Activated CD8-positive, alpha-beta T cell treated with anti-CD3 and anti-CD28 coated beads, Interleukin-2, amount 10 ng/mL, durations not matched to agents 7 days and 5 days (primary cell): ENCODE measurements at regions of chr19 and their contacts with region 1.

Region 1: GRCh38 chr19:1064661-1065605 is 2.0 kb upstream of the ARHGAP45 start:
- DNase-seq: peak; percentile 77
- ATAC-seq: peak; percentile 38
- H3K4me3 Mint-ChIP-seq: peak overlapping the region; percentile 19
- H3K27ac Mint-ChIP-seq: peak overlapping the region; percentile 74
- H3K4me1 Mint-ChIP-seq: peaks cover 48% of the 10 kb centered on the region
- H3K27me3 Mint-ChIP-seq: no peaks in the 10 kb centered on the region

Region 2: GRCh38 chr19:1026189-1027019 is 38.5 kb before region 1 on chr19 and contains the start of gene CNN2:
- CTCF ChIA-PET with region 1: interaction called, 6 read pairs
- POLR2A ChIA-PET with region 1: interaction called, 13 read pairs
- DNase-seq: peak; percentile 74
- ATAC-seq: peak; percentile 72
- H3K4me3 Mint-ChIP-seq: peak within 1 kb of the TSS; percentile 98
- H3K27ac Mint-ChIP-seq: peak within 1 kb of the TSS; percentile 89
- H3K4me1 Mint-ChIP-seq: peaks cover 30% of the 10 kb centered on the region
- H3K27me3 Mint-ChIP-seq: no peaks in the 10 kb centered on the region
- total RNA-seq, gene CNN2: 417 to 455 TPM

Region 3: GRCh38 chr19:1039646-1040475 is 25.1 kb before region 1 on chr19 and contains the start of gene ABCA7:
- CTCF ChIA-PET with region 1: interaction called, 33 read pairs
- POLR2A ChIA-PET with region 1: interaction called, 27 read pairs
- DNase-seq: peak; percentile 99
- ATAC-seq: peak; percentile 94
- H3K4me3 Mint-ChIP-seq: peak within 1 kb of the TSS; percentile 96
- H3K27ac Mint-ChIP-seq: peak within 1 kb of the TSS; percentile 84
- H3K4me1 Mint-ChIP-seq: peaks cover 64% of the 10 kb centered on the region
- H3K27me3 Mint-ChIP-seq: no peaks in the 10 kb centered on the region
- total RNA-seq, gene ABCA7: 76.6 to 77.5 TPM

Region 4: GRCh38 chr19:1087813-1088415 is 23.0 kb after region 1 on chr19:
- CTCF ChIA-PET with region 1: interaction called, 17 read pairs
- POLR2A ChIA-PET with region 1: interaction called, 113 read pairs
- DNase-seq: peak; percentile 68
- ATAC-seq: peak; percentile 47
- H3K4me3 Mint-ChIP-seq: peak overlapping the region; percentile 56
- H3K27ac Mint-ChIP-seq: peak overlapping the region; percentile 83
- H3K4me1 Mint-ChIP-seq: peaks cover 72% of the 10 kb centered on the region
- H3K27me3 Mint-ChIP-seq: no peaks in the 10 kb centered on the region

Region 5: DNA sequence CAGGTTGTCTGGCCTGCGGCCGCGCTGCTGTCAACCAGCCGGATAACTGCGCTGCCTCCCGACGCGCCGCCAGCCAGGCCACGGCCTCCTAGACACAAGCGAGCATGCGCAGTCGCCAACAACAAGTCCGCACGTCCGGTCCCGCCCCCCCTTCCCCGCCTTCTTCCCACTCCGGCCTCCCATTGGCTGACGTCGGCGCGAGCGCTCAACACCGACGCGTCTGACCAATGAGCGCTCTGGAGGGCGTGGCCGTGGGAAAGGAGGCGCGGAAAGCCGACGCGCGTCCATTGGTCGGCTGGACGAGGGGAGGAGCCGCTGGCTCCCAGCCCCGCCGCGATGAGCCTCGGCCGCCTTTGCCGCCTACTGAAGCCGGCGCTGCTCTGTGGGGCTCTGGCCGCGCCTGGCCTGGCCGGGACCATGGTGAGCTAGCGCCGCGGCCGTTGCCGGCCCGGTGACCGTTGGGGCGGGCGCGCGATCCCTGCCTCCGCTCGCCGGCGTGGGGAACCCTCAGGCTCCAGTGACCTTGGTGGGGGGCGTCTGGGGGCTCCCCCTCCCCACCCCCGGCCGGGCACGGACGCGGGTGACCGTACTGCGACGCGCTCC is 38.9 kb after region 1 on chr19 and contains the start of gene GPX4:
- CTCF ChIA-PET with region 1: no interaction called
- POLR2A ChIA-PET with region 1: interaction called, 10 read pairs
- DNase-seq: peak; percentile 99
- ATAC-seq: peak; percentile 93
- H3K4me3 Mint-ChIP-seq: peak within 1 kb of the TSS; percentile 75
- H3K27ac Mint-ChIP-seq: peak within 1 kb of the TSS; percentile 83
- H3K4me1 Mint-ChIP-seq: peaks cover 46% of the 10 kb centered on the region
- H3K27me3 Mint-ChIP-seq: no peaks in the 10 kb centered on the region
- total RNA-seq, gene GPX4: 174 to 177 TPM

Region 6: DNA sequence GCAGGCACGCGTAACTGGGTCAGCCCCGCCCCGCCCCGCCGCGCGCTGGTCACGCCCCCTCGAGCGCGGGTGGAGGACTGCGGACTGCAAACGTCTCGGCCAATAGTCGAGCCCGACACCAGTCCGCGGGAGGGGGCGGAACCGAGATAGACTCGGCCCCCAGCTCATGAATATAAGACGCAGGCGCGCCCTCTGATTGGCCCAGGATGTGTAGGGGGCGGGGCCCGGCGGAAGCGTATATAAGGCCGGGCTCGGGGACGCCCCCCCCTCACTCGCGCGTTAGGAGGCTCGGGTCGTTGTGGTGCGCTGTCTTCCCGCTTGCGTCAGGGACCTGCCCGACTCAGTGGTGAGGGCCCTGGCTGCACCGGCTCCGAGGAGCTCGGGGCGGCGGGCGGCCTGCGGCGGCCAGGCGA is 204.1 kb after region 1 on chr19 and contains the start of gene CIRBP:
- CTCF ChIA-PET with region 1: interaction called, 11 read pairs
- POLR2A ChIA-PET with region 1: interaction called, 12 read pairs
- DNase-seq: peak; percentile 100
- ATAC-seq: peak; percentile 76
- H3K4me3 Mint-ChIP-seq: peak within 1 kb of the TSS; percentile 83
- H3K27ac Mint-ChIP-seq: peak within 1 kb of the TSS; percentile 90
- H3K4me1 Mint-ChIP-seq: peaks cover 75% of the 10 kb centered on the region
- H3K27me3 Mint-ChIP-seq: peaks cover 2% of the 10 kb centered on the region
- total RNA-seq, gene CIRBP: 172 to 195 TPM